Activated naive CD4-positive, alpha-beta T cell treated with anti-CD3 and anti-CD28 coated beads for 36 hours (primary cell): ENCODE measurements at regions of chr20 and their contacts with region 1.

Region 1: DNA sequence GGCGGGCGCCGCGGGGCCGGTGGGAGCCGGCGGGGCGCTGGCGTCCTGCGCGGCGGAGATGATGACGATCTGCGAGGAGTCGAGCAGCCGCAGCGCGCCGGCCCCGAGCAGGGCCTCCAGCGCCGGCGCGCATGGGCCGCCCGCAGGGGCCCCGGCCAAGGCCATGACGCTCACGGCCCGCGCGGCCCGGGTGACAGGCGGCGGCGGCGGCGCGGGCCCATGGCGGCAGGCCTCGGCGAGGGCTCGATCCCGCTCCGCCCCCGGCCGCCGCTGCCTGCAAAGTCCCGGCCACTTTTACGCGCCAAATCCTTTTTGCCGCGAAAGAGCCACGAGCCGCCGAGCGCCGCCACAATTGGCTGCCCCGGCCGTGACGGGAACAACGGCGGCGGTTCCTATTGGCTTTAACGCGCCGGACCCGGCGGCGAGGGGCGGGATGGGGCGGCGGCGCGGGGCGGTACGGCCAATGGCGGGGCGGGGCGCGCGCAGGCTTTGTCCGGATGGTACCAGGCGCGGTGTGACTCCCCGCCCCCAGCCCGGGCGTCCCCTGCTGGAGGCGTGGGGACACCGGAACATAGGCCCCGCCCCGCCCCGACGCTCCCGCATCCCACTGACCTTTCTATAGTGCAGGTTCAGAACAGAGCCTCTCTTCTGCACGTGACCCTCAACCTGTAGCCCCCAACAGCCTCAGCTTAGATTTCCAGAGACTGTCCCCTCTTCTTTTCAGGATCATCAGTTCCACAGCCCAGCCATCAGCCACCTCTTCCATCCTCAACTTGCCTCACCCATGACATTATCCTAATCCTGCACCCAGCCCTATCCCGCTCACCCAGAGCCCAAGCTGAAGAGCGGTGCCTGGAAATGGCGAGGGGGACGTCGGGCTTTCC is at the start of gene E2F1:
- DNase-seq: peak; percentile 97
- H3K4me3 Mint-ChIP-seq: peak within 1 kb of the TSS; percentile 87
- H3K27ac Mint-ChIP-seq: peak within 1 kb of the TSS; percentile 88
- H3K4me1 Mint-ChIP-seq: peaks cover 62% of the 10 kb centered on the region
- H3K27me3 Mint-ChIP-seq: no peaks in the 10 kb centered on the region
- total RNA-seq, gene E2F1: 69.3 to 70.0 TPM

Region 2: GRCh38 chr20:33674295-33675135 is 11.8 kb before region 1 on chr20 and contains the start of gene NECAB3:
- CTCF ChIA-PET with region 1: interaction called, 36 read pairs
- intact Hi-C with region 1: loop called (anchors 1 kb)
- DNase-seq: peak; percentile 56
- H3K4me3 Mint-ChIP-seq: peak within 1 kb of the TSS; percentile 82
- H3K27ac Mint-ChIP-seq: peak within 1 kb of the TSS; percentile 52
- H3K4me1 Mint-ChIP-seq: peaks cover 29% of the 10 kb centered on the region
- H3K27me3 Mint-ChIP-seq: no peaks in the 10 kb centered on the region
- total RNA-seq, gene NECAB3: 12.7 to 14.3 TPM

Region 3: DNA sequence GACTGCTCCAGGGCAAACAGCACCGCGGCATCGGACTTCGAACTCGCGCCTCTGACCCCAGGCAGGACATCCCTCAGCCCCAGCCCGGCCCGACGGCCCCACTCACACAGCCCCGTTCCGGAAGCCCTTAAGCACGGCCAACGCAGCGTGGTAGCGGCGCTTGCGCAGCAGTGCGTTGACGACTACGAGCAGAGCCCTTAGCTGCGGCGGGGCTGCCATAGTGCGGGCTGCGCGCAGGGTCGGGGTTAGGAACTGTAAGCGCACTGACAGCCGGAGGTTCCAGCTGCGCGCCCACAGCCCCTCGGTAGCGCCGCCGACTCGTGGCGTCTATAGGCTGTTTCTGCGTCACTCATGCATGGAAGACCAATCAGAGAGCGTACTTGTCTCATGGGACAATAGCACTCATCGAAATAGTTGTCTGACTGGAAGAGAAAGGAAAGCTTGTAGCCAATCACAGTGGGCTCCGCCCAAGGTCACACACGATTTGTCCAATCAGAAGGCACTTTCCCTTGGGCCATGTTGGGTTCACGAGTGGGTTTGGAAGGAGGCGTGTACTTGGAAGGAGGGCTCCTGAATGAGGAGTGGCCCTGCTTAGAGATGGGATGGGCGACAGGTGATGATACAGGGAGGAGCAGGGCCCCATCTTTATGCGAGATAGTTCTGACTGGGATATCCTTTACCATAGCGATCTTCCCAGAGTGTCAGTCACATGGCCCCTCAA is 33.8 kb after region 1 on chr20 and contains the start of gene PXMP4:
- CTCF ChIA-PET with region 1: interaction called, 3 read pairs
- intact Hi-C with region 1: loop called (anchors 1 kb)
- DNase-seq: peak; percentile 95
- H3K4me3 Mint-ChIP-seq: peak within 1 kb of the TSS; percentile 79
- H3K27ac Mint-ChIP-seq: peak within 1 kb of the TSS; percentile 76
- H3K4me1 Mint-ChIP-seq: peaks cover 21% of the 10 kb centered on the region
- H3K27me3 Mint-ChIP-seq: no peaks in the 10 kb centered on the region
- total RNA-seq, gene PXMP4: 9.5 to 10.3 TPM

Region 4: DNA sequence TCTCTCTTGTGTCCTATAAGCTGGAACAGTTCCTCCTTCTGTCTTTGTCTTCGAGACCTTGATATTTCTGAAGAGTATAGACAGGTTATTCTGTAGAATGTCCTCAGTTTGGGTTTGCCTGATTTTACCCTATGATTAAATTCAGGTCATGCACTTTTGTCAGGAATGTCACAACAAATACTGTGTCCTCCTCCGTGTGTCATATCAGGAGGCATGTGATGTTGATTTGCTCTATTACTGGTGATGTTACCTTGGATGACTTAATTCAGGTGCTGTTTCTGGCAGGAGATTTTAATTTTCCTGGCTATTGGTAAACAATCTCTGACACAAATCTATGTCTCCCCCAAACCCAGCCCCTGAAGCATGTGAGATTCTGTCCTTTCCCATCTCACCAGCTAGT is 91.5 kb after region 1 on chr20:
- CTCF ChIA-PET with region 1: no interaction called
- intact Hi-C with region 1: loop called (anchors 5 kb)
- DNase-seq: no peak
- H3K4me3 Mint-ChIP-seq: no peak overlapping the region
- H3K27ac Mint-ChIP-seq: no peak overlapping the region
- H3K4me1 Mint-ChIP-seq: peaks cover 15% of the 10 kb centered on the region
- H3K27me3 Mint-ChIP-seq: no peaks in the 10 kb centered on the region